Activated T-helper 2 cell treated with anti-CD3 and anti-CD28 coated beads, Interferon-gamma antibody, Interleukin-2, Interleukin-4, amounts not matched to agents 10 μg/mL and 5 μg/mL and 100 μg/mL, durations not matched to agents 14 hours and 24 hours and 36 hours (primary cell): ENCODE measurements at regions of chr4 and their contacts with region 1.

Region 1: GRCh38 chr4:17810260-17811077 is at the starts of genes DCAF16 and NCAPG:
- DNase-seq: peak; percentile 99
- H3K4me3 Mint-ChIP-seq: peak within 1 kb of the TSS; percentile 100
- H3K27ac Mint-ChIP-seq: peak within 1 kb of the TSS; percentile 100
- H3K4me1 Mint-ChIP-seq: peaks cover 62% of the 10 kb centered on the region
- H3K27me3 Mint-ChIP-seq: no peaks in the 10 kb centered on the region
- total RNA-seq, gene DCAF16: 41.1 and 41.7 TPM in 2 replicates
- total RNA-seq, gene NCAPG: 55.9 and 58.2 TPM in 2 replicates

Region 2: DNA sequence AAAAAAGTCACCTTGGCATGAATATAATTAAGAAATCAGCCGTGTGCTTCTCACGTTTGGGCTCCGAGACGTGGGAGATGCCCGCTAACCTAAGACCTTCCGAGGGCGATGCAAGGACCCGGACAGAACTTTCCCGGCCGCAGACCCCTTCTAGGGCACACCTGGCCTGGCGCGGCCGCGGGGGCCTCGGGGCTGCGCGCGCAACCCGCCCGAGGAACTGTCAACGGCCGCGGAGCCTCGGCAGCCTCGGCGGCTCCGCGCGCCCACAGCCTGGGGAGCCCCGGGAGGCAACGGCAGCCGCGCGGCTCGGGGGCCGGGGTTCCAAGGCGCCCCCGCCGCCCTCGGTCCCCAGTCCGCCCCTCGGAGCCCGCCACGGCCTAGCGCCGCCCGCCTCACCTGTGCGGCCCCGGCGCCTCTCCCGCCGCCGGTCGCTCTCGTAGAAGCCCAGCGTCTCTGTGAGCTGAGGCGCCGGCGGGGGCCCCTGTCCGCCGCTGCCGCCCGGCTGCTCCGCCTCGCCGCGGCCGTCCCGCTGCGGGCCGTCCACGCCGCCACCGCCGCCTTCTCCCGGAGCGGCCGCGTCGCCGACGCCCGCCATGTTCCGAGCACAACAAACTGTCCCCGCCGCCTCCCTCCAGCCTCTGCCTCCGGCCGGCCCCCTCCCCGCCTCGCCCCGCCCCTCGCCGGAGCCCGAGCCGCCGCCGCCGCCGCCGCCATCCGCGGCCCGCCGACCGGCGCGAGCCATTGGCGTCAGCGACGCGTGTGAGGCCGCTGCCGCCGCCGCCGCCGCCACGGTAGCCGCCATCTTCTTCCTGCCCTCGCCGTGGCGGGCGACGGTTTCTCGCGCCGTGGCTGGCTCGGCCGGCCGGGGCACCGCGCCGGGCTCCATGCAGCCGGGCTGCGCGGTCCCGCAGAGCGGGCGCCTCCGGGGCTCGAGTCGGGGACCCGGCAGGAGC is 1584.3 kb before region 1 on chr4 and contains the start of gene TAPT1:
- intact Hi-C with region 1: loop called (anchors 10 kb)
- DNase-seq: peak; percentile 74
- H3K4me3 Mint-ChIP-seq: peak within 1 kb of the TSS; percentile 95
- H3K27ac Mint-ChIP-seq: peak within 1 kb of the TSS; percentile 98
- H3K4me1 Mint-ChIP-seq: peaks cover 48% of the 10 kb centered on the region
- H3K27me3 Mint-ChIP-seq: no peaks in the 10 kb centered on the region
- total RNA-seq, gene TAPT1: 28.1 and 32.9 TPM in 2 replicates

Region 3: DNA sequence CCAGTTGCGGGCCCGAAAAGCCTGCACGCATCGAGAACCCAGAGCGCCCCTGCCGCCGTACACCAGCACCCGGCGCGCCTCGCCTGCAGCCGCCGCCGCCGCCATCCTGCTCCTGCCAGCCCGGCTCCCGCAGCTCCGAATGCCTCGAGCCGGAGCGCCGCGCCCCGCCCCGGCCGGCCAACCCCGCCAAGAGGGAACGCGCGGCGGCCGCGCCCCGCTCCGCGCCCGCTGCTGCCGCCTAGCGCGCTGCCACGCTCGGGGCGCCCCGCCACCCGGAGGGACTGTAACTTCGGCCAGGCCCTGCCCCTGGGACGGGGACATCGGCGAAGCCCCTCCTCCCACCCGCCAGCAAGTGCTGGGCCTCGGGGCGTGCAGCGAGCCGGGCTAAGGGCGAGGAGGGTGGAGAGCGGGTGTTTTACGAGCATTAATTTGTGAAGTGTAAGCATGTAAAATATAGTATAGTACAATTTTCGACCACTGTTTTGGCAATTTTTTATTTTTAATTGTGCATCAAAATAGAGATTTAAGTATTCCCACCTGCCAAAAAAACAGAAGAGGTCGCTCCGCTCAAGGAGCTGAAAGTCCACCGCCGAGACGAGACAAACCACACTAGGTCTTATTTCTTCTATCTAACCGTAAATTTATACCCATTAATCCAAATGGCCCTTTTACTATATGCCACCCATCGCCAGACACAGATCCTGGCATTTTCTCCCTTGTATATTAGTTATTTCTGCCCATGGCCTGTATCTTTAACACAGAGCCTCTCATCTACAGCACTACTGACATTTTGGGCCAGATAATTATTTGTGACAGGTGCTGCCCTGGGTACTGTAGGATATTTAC is 298.3 kb before region 1 on chr4 and contains the start of gene QDPR:
- intact Hi-C with region 1: loop called (anchors 5 kb)
- DNase-seq: peak; percentile 70
- H3K4me3 Mint-ChIP-seq: peak within 1 kb of the TSS; percentile 99
- H3K27ac Mint-ChIP-seq: peak within 1 kb of the TSS; percentile 84
- H3K4me1 Mint-ChIP-seq: peaks cover 22% of the 10 kb centered on the region
- H3K27me3 Mint-ChIP-seq: peaks cover 14% of the 10 kb centered on the region
- total RNA-seq, gene QDPR: 28.2 and 34.3 TPM in 2 replicates

Region 4: GRCh38 chr4:17576932-17577665 is 233.4 kb before region 1 on chr4 and contains the start of gene LAP3:
- intact Hi-C with region 1: loop called (anchors 1 kb)
- DNase-seq: peak; percentile 98
- H3K4me3 Mint-ChIP-seq: peak within 1 kb of the TSS; percentile 93
- H3K27ac Mint-ChIP-seq: peak within 1 kb of the TSS; percentile 87
- H3K4me1 Mint-ChIP-seq: peaks cover 26% of the 10 kb centered on the region
- H3K27me3 Mint-ChIP-seq: no peaks in the 10 kb centered on the region
- total RNA-seq, gene LAP3: 90.8 and 94.9 TPM in 2 replicates

Region 5: DNA sequence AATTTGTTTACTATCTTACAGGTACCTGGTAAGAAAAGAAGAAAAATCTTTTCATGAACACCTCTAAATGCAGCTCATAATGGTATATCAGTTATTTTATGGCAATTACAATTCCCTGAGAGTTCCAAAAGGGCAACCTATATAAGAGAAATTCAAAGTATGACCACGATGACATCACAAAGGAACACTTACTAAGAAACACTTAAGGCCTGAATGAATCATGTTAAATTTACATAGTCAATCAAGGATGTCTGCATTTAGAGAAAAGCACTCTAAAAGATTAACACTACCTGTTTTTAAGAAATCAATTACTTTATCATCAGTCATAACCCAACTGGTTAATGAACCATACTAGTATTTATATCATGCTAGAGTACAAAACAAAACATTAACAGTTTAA is 147.2 kb after region 1 on chr4:
- intact Hi-C with region 1: loop called (anchors 10 kb)
- DNase-seq: no peak
- H3K4me3 Mint-ChIP-seq: no peak overlapping the region
- H3K27ac Mint-ChIP-seq: no peak overlapping the region
- H3K4me1 Mint-ChIP-seq: peaks cover 24% of the 10 kb centered on the region
- H3K27me3 Mint-ChIP-seq: no peaks in the 10 kb centered on the region

Region 6: DNA sequence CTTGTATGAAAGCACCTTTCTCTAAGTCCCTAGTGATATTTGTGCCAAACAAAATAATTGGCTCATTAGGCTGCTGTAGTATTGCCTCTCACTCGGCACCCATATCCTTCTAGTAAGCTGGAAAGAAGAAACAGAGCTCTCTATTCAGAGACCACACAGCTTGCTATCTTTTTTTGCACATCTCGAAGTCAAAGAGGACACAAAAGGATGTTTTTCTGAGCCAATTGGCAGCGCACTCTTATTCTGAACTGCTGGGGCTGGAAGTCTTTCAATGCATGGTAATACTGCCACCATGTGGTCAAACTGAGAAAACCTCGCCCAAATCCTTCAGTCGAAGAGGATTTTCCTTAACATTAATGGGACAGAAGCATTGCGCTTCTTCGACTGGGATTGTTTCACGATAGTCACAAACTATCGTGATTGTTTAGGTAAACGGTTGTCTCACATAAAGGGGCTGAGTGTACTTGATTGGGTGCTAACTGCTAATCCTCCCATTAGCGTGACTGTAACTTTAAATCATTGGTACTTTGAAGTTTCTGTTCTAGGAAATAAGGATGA is 783.1 kb after region 1 on chr4:
- intact Hi-C with region 1: loop called (anchors 2 kb)
- DNase-seq: peak; percentile 14
- H3K4me3 Mint-ChIP-seq: no peak overlapping the region
- H3K27ac Mint-ChIP-seq: no peak overlapping the region
- H3K4me1 Mint-ChIP-seq: peaks cover 3% of the 10 kb centered on the region
- H3K27me3 Mint-ChIP-seq: peaks cover 2% of the 10 kb centered on the region